A549 (cell line): ENCODE measurements at regions of chr4 and their contacts with region 1.

Region 1: GRCh38 chr4:15882675-15883086 is 55.9 kb downstream of the FGFBP1 start:
- DNase-seq: peak; percentile 37 to 87
- ATAC-seq: peak; percentile 89 to 98
- H3K4me3 ChIP-seq: no peak overlapping the region
- H3K27ac ChIP-seq: peak overlapping the region in 1 of 2 experiments; percentile 61; a peak in 2 of 6 replicates
- H3K4me1 ChIP-seq: 0 out of 3 replicates have a peak, but pooled peaks cover 3% of the 10 kb centered on the region
- CTCF ChIP-seq: peak; percentile 86
- EP300 ChIP-seq: no peak
- POLR2A ChIP-seq: no peak
- RAD21 ChIP-seq: peak; percentile 94 to 98

Region 2: GRCh38 chr4:15746110-15746509 is 136.6 kb before region 1 on chr4:
- CTCF ChIA-PET with region 1: no interaction called
- POLR2A ChIA-PET with region 1: no interaction called
- DNase-seq: no peak
- ATAC-seq: no peak
- H3K4me3 ChIP-seq: no peak overlapping the region
- H3K27ac ChIP-seq: no peak overlapping the region
- H3K4me1 ChIP-seq: no peaks in the 10 kb centered on the region
- CTCF ChIP-seq: no peak
- EP300 ChIP-seq: no peak
- POLR2A ChIP-seq: no peak
- RAD21 ChIP-seq: no peak

Region 3: DNA sequence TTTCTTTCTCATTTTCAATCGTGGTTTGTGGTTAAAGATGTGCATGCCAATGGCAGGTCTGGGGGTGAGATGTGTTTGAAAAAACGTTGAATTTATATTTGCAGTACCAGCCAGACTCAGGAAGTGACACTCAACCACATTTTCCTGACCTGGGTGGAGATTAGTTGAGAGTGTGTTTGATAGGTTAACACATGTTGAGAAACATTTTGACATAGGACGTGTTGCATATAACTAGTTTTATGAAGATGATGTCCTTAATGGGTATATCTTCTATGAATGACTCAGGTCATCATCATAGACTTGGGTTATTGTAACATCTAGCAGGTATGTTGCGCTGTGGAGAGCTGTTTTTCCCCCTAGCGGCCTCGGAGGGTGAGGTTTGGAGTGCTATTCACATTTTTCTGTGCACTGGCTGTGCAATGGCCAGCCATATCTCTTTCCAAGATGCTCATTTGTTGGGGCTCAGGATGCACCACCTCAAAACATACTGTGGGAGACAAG is 126.3 kb before region 1 on chr4:
- CTCF ChIA-PET with region 1: no interaction called
- POLR2A ChIA-PET with region 1: no interaction called
- DNase-seq: peak in 1 of 2 experiments; percentile 37
- ATAC-seq: peak; percentile 87 to 93
- H3K4me3 ChIP-seq: no peak overlapping the region
- H3K27ac ChIP-seq: no peak overlapping the region
- H3K4me1 ChIP-seq: no peaks in the 10 kb centered on the region
- CTCF ChIP-seq: no peak
- EP300 ChIP-seq: no peak
- POLR2A ChIP-seq: no peak
- RAD21 ChIP-seq: peak in 1 of 2 experiments; percentile 18; a peak in 1 of 5 replicates

Region 4: GRCh38 chr4:15868806-15869410 is 13.8 kb before region 1 on chr4:
- CTCF ChIA-PET with region 1: interaction called, 12 read pairs
- POLR2A ChIA-PET with region 1: no interaction called
- DNase-seq: no peak
- ATAC-seq: no peak
- H3K4me3 ChIP-seq: no peak overlapping the region
- H3K27ac ChIP-seq: no peak overlapping the region
- H3K4me1 ChIP-seq: no peaks in the 10 kb centered on the region
- CTCF ChIP-seq: no peak
- EP300 ChIP-seq: no peak
- POLR2A ChIP-seq: no peak
- RAD21 ChIP-seq: no peak

Region 5: GRCh38 chr4:15913631-15913970 is 30.9 kb after region 1 on chr4:
- CTCF ChIA-PET with region 1: interaction called, 24 read pairs
- POLR2A ChIA-PET with region 1: no interaction called
- DNase-seq: peak; percentile 31 to 72
- ATAC-seq: peak; percentile 89 to 92
- H3K4me3 ChIP-seq: no peak overlapping the region
- H3K27ac ChIP-seq: peak overlapping the region in 1 of 2 experiments; percentile 76; a peak in 5 of 6 replicates
- H3K4me1 ChIP-seq: peaks cover 20% of the 10 kb centered on the region
- CTCF ChIP-seq: no peak
- EP300 ChIP-seq: no peak
- POLR2A ChIP-seq: no peak
- RAD21 ChIP-seq: no peak

Region 6: DNA sequence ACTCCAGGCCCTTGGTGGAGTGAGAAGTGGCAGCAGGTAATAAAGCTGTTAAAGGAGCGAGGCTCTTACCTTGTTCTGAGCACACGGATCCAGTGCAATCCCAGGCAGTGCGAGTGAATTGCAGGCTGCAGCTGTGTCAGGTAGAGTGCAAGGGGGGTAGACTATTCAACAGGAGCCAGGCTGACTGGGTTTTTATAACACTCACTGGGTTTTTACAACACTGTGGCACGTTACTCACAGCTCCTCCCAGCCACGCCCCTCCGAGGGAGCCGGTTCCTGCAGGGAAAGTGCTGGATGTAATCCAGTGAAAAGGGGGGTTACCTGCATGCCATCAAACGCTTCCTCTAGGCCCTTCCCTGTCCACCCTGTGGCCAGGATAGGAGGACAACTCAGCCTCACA is 55.5 kb after region 1 on chr4:
- CTCF ChIA-PET with region 1: interaction called, 31 read pairs
- POLR2A ChIA-PET with region 1: no interaction called
- DNase-seq: peak; percentile 17 to 26
- ATAC-seq: peak; percentile 59 to 66
- H3K4me3 ChIP-seq: no peak overlapping the region
- H3K27ac ChIP-seq: peak overlapping the region in 1 of 2 experiments; percentile 72; a peak in 3 of 6 replicates
- H3K4me1 ChIP-seq: peaks cover 7% of the 10 kb centered on the region
- CTCF ChIP-seq: no peak
- EP300 ChIP-seq: no peak
- POLR2A ChIP-seq: no peak
- RAD21 ChIP-seq: no peak

Region 7: GRCh38 chr4:15963001-15963451 is 80.3 kb after region 1 on chr4 and contains the start of gene FGFBP2:
- CTCF ChIA-PET with region 1: interaction called, 58 read pairs
- POLR2A ChIA-PET with region 1: no interaction called
- DNase-seq: peak; percentile 28 to 48
- ATAC-seq: peak; percentile 89 to 95
- H3K4me3 ChIP-seq: no peak within 1 kb of the TSS
- H3K27ac ChIP-seq: no peak within 1 kb of the TSS
- H3K4me1 ChIP-seq: no peaks in the 10 kb centered on the region
- CTCF ChIP-seq: peak; percentile 41
- EP300 ChIP-seq: no peak
- POLR2A ChIP-seq: no peak
- RAD21 ChIP-seq: peak; percentile 50 to 63; a peak in 4 of 5 replicates
- polyA plus RNA-seq, gene FGFBP2: not detected in 2 replicates